ENCODE measurements at regions of chr22 and their contacts with region 1.

Region 1: GRCh38 chr22:46501701-46502100 is 35.7 kb downstream of the CELSR1 start:
- DNase-seq: no peak
- ATAC-seq: peak; percentile 67
- H3K4me3 ChIP-seq: no peak overlapping the region
- H3K27ac ChIP-seq: no peak overlapping the region
- H3K4me1 ChIP-seq: no peaks in the 10 kb centered on the region; the same call in 1 of the 2 replicates
- H3K27me3 ChIP-seq: no peaks in the 10 kb centered on the region
- CTCF ChIP-seq: no peak

Region 2: GRCh38 chr22:46150034-46150654 is 351.6 kb before region 1 on chr22 and contains the start of gene PPARA:
- CTCF ChIA-PET with region 1: no interaction called
- POLR2A ChIA-PET with region 1: interaction called, 13 read pairs
- in situ Hi-C with region 1: no loop called
- intact Hi-C with region 1: no loop called
- DNase-seq: no peak
- ATAC-seq: peak; percentile 91
- H3K4me3 ChIP-seq: peak within 1 kb of the TSS; percentile 62 to 63
- H3K27ac ChIP-seq: no peak within 1 kb of the TSS
- H3K4me1 ChIP-seq: no peaks in the 10 kb centered on the region
- H3K27me3 ChIP-seq: no peaks in the 10 kb centered on the region
- CTCF ChIP-seq: no peak
- total RNA-seq, gene PPARA: 10.7 TPM

Region 3: GRCh38 chr22:46202897-46203600 is 298.7 kb before region 1 on chr22:
- CTCF ChIA-PET with region 1: no interaction called
- POLR2A ChIA-PET with region 1: no interaction called
- in situ Hi-C with region 1: no loop called
- intact Hi-C with region 1: no loop called
- DNase-seq: no peak
- ATAC-seq: no peak
- H3K4me3 ChIP-seq: no peak overlapping the region
- H3K27ac ChIP-seq: no peak overlapping the region
- H3K4me1 ChIP-seq: peaks cover 5% of the 10 kb centered on the region; the same call in 1 of the 2 replicates
- H3K27me3 ChIP-seq: no peaks in the 10 kb centered on the region
- CTCF ChIP-seq: no peak

Region 4: GRCh38 chr22:46367707-46368191 is 134.0 kb before region 1 on chr22:
- CTCF ChIA-PET with region 1: interaction called, 12 read pairs
- POLR2A ChIA-PET with region 1: no interaction called
- in situ Hi-C with region 1: no loop called
- intact Hi-C with region 1: no loop called
- DNase-seq: peak; percentile 46
- ATAC-seq: peak; percentile 91
- H3K4me3 ChIP-seq: no peak overlapping the region
- H3K27ac ChIP-seq: no peak overlapping the region
- H3K4me1 ChIP-seq: no peaks in the 10 kb centered on the region
- H3K27me3 ChIP-seq: no peaks in the 10 kb centered on the region
- CTCF ChIP-seq: peak; percentile 92

Region 5: GRCh38 chr22:46425016-46425415 is 76.7 kb before region 1 on chr22:
- CTCF ChIA-PET with region 1: no interaction called
- POLR2A ChIA-PET with region 1: interaction called, 16 read pairs
- in situ Hi-C with region 1: no loop called
- intact Hi-C with region 1: no loop called
- DNase-seq: no peak
- ATAC-seq: no peak
- H3K4me3 ChIP-seq: no peak overlapping the region
- H3K27ac ChIP-seq: no peak overlapping the region
- H3K4me1 ChIP-seq: no peaks in the 10 kb centered on the region
- H3K27me3 ChIP-seq: no peaks in the 10 kb centered on the region
- CTCF ChIP-seq: no peak

Region 6: DNA sequence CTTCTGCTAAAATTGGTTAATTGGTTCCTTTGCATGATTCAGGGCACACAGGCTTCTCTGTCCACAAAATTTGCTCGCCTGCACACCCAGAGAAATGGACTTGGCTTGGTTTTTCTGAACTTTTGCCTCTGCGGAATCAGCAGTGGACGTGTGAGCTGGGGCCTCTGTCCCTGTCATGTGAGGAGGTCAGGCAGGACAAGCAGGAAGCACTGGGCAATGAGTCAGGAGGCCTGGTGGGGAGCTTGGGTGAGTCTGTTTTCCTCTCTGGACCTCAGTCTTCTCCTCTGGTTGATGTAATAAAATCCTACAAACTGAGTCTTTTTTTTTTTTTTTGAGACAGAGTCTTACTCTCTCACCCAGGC is 46.2 kb after region 1 on chr22:
- CTCF ChIA-PET with region 1: no interaction called
- POLR2A ChIA-PET with region 1: no interaction called
- in situ Hi-C with region 1: no loop called
- intact Hi-C with region 1: no loop called
- DNase-seq: no peak
- ATAC-seq: peak; percentile 51; the same call in 1 of the 2 replicates
- H3K4me3 ChIP-seq: no peak overlapping the region
- H3K27ac ChIP-seq: no peak overlapping the region
- H3K4me1 ChIP-seq: peaks cover 21% of the 10 kb centered on the region
- H3K27me3 ChIP-seq: no peaks in the 10 kb centered on the region
- CTCF ChIP-seq: no peak

Measured in Panc1 (cell line).